ENCODE measurements at regions of chr5 and their contacts with region 1.

Region 1: GRCh38 chr5:6377905-6378765 is at the start of gene MED10:
- DNase-seq: peak; percentile 91
- ATAC-seq: peak; percentile 98
- H3K4me3 Mint-ChIP-seq: peak within 1 kb of the TSS; percentile 95
- H3K27ac Mint-ChIP-seq: peak within 1 kb of the TSS; percentile 89
- H3K4me1 Mint-ChIP-seq: peaks cover 38% of the 10 kb centered on the region
- H3K27me3 Mint-ChIP-seq: peaks cover 2% of the 10 kb centered on the region
- CTCF ChIP-seq: no peak
- total RNA-seq, gene MED10: 45.0 and 47.7 TPM in 2 replicates

Region 2: DNA sequence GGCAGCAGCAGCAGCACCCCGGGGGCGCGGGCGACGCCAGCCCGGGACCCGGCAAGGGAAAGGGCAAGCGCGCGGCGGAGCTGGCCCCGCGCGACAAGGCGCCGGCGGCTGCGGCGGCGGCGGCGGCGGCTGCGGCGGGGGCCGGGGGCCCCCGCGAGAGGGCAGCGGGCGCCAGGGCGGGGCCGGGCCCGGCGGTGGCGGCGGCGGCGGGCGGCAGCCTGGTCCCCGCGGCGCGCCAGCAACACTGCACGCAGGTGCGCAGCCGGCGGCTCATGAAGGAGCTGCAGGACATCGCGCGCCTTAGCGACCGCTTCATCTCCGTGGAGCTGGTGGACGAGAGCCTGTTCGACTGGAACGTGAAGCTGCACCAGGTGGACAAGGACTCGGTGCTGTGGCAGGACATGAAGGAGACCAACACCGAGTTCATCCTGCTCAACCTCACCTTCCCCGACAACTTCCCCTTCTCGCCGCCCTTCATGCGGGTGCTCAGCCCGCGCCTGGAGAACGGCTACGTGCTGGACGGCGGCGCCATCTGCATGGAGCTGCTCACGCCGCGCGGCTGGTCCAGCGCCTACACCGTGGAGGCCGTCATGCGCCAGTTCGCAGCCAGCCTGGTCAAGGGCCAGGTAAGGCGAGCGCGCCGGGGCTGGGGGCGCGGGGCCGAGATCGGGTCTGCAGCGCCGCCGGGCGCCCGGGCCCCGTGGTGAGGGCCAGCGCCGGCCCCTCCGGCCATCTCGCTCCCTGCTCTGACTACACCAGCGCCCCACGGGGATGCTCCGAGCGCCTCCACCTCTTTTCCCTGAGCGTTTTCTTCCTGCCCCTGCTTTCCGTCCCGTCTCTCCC is 70.7 kb after region 1 on chr5 and contains the start of gene UBE2QL1:
- CTCF ChIA-PET with region 1: no interaction called
- POLR2A ChIA-PET with region 1: no interaction called
- intact Hi-C with region 1: loop called (anchors 2 kb)
- DNase-seq: peak; percentile 27
- ATAC-seq: peak; percentile 78
- H3K4me3 Mint-ChIP-seq: peak within 1 kb of the TSS; percentile 83
- H3K27ac Mint-ChIP-seq: peak within 1 kb of the TSS; percentile 20
- H3K4me1 Mint-ChIP-seq: peaks cover 14% of the 10 kb centered on the region
- H3K27me3 Mint-ChIP-seq: peaks cover 40% of the 10 kb centered on the region
- CTCF ChIP-seq: no peak
- total RNA-seq, gene UBE2QL1: 1.2 and 1.3 TPM in 2 replicates

Region 3: GRCh38 chr5:6488021-6488420 is 109.9 kb after region 1 on chr5:
- CTCF ChIA-PET with region 1: no interaction called
- POLR2A ChIA-PET with region 1: interaction called, 6 read pairs
- intact Hi-C with region 1: loop called (anchors 2 kb)
- DNase-seq: no peak
- ATAC-seq: no peak
- H3K4me3 Mint-ChIP-seq: no peak overlapping the region
- H3K27ac Mint-ChIP-seq: no peak overlapping the region
- H3K4me1 Mint-ChIP-seq: peaks cover 51% of the 10 kb centered on the region
- H3K27me3 Mint-ChIP-seq: no peaks in the 10 kb centered on the region
- CTCF ChIP-seq: no peak

Region 4: DNA sequence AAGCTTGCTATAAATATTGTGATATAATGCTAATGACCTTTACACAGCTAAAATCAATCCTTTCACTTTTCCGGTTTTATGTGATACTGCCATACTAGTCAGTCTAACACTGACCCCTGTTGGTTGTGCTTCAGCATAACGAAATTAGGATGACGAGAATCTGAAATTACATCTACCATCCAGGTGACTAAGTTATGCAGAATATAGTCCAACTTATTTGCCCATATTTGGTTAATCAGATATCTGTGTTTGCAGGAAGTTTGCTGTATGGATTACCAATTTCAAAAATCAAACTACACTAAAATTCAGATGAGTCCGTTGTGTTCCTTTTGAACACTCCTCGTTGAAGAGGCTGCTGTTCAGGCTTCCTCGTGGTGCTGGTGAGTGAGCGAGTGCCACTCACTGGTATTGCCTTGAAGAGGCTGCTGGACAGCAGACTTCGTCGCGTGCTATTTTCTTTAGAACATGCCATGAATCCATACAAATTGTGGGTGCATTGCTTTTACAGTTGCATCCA is 367.6 kb after region 1 on chr5:
- CTCF ChIA-PET with region 1: interaction called, 3 read pairs
- POLR2A ChIA-PET with region 1: no interaction called
- intact Hi-C with region 1: loop called (anchors 5 kb)
- DNase-seq: no peak
- ATAC-seq: peak; percentile 87
- H3K4me3 Mint-ChIP-seq: no peak overlapping the region
- H3K27ac Mint-ChIP-seq: peak overlapping the region; percentile 46
- H3K4me1 Mint-ChIP-seq: peaks cover 9% of the 10 kb centered on the region
- H3K27me3 Mint-ChIP-seq: no peaks in the 10 kb centered on the region
- CTCF ChIP-seq: peak; percentile 71

Region 5: GRCh38 chr5:7868773-7869473 is 1490.8 kb after region 1 on chr5 and contains the starts of genes FASTKD3 and MTRR:
- CTCF ChIA-PET with region 1: no interaction called
- POLR2A ChIA-PET with region 1: no interaction called
- intact Hi-C with region 1: loop called (anchors 5 kb)
- DNase-seq: peak; percentile 80
- ATAC-seq: peak; percentile 99
- H3K4me3 Mint-ChIP-seq: peak within 1 kb of the TSS; percentile 89
- H3K27ac Mint-ChIP-seq: peak within 1 kb of the TSS; percentile 65
- H3K4me1 Mint-ChIP-seq: peaks cover 62% of the 10 kb centered on the region
- H3K27me3 Mint-ChIP-seq: no peaks in the 10 kb centered on the region
- CTCF ChIP-seq: no peak
- total RNA-seq, gene FASTKD3: 12.1 and 16.0 TPM in 2 replicates
- total RNA-seq, gene MTRR: 54.8 and 70.7 TPM in 2 replicates

Measured in activated B cell treated with CpG ODN at 0.5 μM for 24 hours (primary cell).